PC-9 (cell line): ENCODE measurements at regions of chr17 and their contacts with region 1.

Region 1: DNA sequence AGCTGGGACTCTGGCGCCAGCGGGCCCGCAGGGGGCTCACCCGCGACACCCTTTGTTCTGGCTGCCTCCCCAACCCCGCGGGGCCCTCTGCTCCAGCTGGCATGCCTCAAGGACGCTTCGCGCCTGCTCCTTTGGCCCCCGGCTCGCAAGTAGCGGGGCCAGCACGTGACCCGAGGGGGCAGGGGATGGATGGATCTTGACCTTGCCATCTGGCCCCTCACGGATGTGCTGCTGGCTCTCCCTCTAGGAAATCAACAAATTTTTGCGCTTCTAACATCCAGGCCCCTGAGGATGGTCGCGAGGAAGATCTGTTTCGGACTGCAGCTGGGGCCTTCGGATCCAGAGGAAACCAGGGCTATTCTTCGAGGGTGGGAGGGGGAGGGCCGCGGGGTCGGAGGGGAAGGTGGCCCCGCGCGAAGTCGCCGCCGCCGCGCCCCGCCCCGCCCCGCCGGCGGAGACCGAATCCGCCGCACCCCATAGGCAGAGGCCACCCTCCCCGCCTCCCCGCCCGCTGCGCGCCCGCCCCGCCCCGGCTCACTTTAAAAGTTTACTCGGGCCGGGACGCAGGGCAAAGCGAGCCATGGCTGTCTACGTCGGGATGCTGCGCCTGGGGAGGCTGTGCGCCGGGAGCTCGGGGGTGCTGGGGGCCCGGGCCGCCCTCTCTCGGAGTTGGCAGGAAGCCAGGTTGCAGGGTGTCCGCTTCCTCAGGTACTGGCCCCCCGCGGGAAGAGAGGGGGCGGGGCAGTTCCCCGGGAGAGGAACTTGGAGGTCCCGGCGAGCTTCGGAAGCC is at the start of gene ACSF2:
- DNase-seq: peak; percentile 56 to 72
- H3K4me3 ChIP-seq: peak within 1 kb of the TSS; percentile 63
- H3K27ac ChIP-seq: peak within 1 kb of the TSS; percentile 92
- H3K4me1 ChIP-seq: peaks cover 84% of the 10 kb centered on the region
- H3K27me3 ChIP-seq: no peaks in the 10 kb centered on the region
- CTCF ChIP-seq: no peak
- total RNA-seq, gene ACSF2: 149 and 154 TPM in 2 replicates

Region 2: GRCh38 chr17:49677933-49678847 is 747.7 kb before region 1 on chr17 and contains the start of gene SPOP:
- CTCF ChIA-PET with region 1: no interaction called
- POLR2A ChIA-PET with region 1: interaction called, 20 read pairs
- intact Hi-C with region 1: no loop called
- DNase-seq: peak; percentile 97
- H3K4me3 ChIP-seq: peak within 1 kb of the TSS; percentile 85
- H3K27ac ChIP-seq: peak within 1 kb of the TSS; percentile 42
- H3K4me1 ChIP-seq: peaks cover 13% of the 10 kb centered on the region
- H3K27me3 ChIP-seq: peaks cover 6% of the 10 kb centered on the region
- CTCF ChIP-seq: no peak
- total RNA-seq, gene SPOP: 41.7 and 47.3 TPM in 2 replicates

Region 3: GRCh38 chr17:50397111-50397918 is 28.6 kb before region 1 on chr17 and contains the start of gene LRRC59:
- CTCF ChIA-PET with region 1: interaction called, 19 read pairs
- POLR2A ChIA-PET with region 1: interaction called, 5 read pairs
- intact Hi-C with region 1: loop called (anchors 2 kb)
- DNase-seq: peak; percentile 64 to 88
- H3K4me3 ChIP-seq: peak within 1 kb of the TSS; percentile 98
- H3K27ac ChIP-seq: peak within 1 kb of the TSS; percentile 79
- H3K4me1 ChIP-seq: peaks cover 46% of the 10 kb centered on the region
- H3K27me3 ChIP-seq: no peaks in the 10 kb centered on the region
- CTCF ChIP-seq: peak; percentile 96
- total RNA-seq, gene LRRC59: 72.9 and 102 TPM in 2 replicates

Region 4: GRCh38 chr17:50443368-50443971 is 17.6 kb after region 1 on chr17:
- CTCF ChIA-PET with region 1: interaction called, 16 read pairs
- POLR2A ChIA-PET with region 1: interaction called, 4 read pairs
- intact Hi-C with region 1: loop called (anchors 1 kb)
- DNase-seq: peak; percentile 43 to 97
- H3K4me3 ChIP-seq: peak overlapping the region; percentile 47
- H3K27ac ChIP-seq: peak overlapping the region; percentile 90
- H3K4me1 ChIP-seq: peaks cover 87% of the 10 kb centered on the region
- H3K27me3 ChIP-seq: no peaks in the 10 kb centered on the region
- CTCF ChIP-seq: no peak; the same call in 1 of the 2 replicates

Region 5: GRCh38 chr17:50452610-50453300 is 26.9 kb after region 1 on chr17:
- CTCF ChIA-PET with region 1: no interaction called
- POLR2A ChIA-PET with region 1: no interaction called
- intact Hi-C with region 1: loop called (anchors 1 kb)
- DNase-seq: peak; percentile 56 to 98
- H3K4me3 ChIP-seq: peak overlapping the region; percentile 39; the same call in 1 of the 2 replicates
- H3K27ac ChIP-seq: peak overlapping the region; percentile 64
- H3K4me1 ChIP-seq: peaks cover 72% of the 10 kb centered on the region
- H3K27me3 ChIP-seq: no peaks in the 10 kb centered on the region
- CTCF ChIP-seq: no peak

Region 6: DNA sequence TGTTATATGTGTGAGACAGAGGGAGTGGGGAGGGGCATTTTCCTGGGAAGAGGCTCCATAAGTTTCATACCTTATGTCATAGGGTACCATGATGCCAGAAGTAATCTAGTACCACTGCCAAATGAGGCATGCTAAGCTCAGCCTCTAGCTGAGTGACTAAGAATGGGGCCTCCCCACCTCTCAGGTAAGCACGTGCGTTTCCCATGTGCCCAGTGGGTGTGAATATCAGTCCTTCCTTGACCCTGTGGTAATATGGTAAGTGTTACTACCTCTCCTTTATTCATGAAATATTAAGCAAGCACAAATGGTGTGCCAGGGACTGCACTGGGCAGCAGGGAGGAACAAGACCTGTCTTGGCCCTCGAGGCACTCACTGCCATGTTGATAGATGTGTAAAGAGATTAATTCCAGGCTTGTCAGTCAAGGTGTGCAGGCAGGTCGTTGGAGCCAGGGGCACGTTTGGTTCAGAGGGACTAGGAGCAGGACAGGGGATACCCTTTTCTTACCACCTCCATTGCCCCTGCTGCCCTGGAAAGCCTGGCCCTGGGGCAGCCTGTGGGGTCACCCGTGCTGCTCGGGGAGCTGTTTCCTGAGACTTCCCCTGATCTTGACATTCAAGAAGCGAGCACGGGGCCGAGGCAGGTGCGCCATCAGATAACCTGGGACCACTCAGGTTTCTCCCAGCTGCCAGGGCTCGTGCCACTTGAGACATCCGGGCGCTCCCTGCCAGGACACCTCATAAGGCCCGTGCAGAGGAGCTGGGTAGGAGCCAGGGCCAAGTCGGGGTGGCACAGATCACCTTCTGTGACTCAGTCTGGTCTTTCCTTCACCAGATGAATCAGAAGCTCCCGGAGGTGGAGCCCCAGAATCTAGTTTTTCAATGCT is 61.6 kb after region 1 on chr17:
- CTCF ChIA-PET with region 1: no interaction called
- POLR2A ChIA-PET with region 1: no interaction called
- intact Hi-C with region 1: no loop called
- DNase-seq: peak; percentile 80 to 91
- H3K4me3 ChIP-seq: no peak overlapping the region
- H3K27ac ChIP-seq: no peak overlapping the region
- H3K4me1 ChIP-seq: peaks cover 25% of the 10 kb centered on the region
- H3K27me3 ChIP-seq: no peaks in the 10 kb centered on the region
- CTCF ChIP-seq: no peak

Region 7: DNA sequence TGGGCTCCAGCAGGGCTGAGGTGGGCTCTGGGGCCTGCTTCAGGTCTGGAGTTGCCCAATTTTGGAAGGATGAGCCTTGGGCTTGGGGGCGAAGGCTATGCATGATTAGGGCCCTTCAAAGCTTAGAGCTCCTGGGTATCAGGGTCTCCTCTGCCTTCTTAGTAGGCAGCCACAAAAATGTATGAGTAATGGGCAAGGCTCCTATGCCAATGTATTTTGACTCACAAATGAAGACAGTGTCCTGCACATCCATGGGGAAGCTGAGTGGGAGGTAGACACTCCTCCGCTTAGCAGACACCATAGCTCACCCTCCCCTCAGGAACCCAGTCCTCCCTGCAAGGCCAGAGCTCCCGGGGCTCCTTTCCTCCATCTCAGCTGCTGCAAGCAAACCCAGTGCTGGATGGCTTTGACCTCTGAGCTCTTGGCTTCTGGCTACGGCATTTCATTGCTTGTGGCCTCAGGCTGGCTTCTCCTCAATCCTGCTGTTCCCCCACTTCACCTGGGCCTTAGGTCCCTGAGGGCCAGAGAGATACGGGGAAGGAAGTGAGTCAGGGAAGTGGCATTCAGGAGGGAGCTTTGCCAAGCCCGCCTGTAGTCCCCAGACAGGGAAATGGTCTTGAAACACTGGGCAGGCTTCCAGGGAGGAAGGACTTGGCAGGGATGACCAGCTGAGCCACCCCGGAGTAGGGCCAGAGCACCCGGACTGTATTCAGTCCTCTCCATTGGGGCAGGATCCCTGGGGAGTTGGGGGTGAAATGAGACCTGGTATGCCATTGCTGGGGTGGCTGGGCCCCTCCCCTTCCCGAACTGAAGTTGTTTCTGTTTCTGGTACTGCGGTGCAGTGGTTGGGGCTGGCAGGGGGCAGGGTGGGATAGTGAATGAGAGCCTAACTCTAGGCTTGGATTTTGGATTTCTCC is 213.2 kb after region 1 on chr17:
- CTCF ChIA-PET with region 1: no interaction called
- POLR2A ChIA-PET with region 1: interaction called, 12 read pairs
- intact Hi-C with region 1: no loop called
- DNase-seq: peak; percentile 97 to 100
- H3K4me3 ChIP-seq: peak overlapping the region; percentile 81; the same call in 1 of the 2 replicates
- H3K27ac ChIP-seq: peak overlapping the region; percentile 91
- H3K4me1 ChIP-seq: peaks cover 78% of the 10 kb centered on the region
- H3K27me3 ChIP-seq: no peaks in the 10 kb centered on the region
- CTCF ChIP-seq: no peak

Region 8: GRCh38 chr17:50649042-50649904 is 223.4 kb after region 1 on chr17:
- CTCF ChIA-PET with region 1: no interaction called
- POLR2A ChIA-PET with region 1: no interaction called
- intact Hi-C with region 1: no loop called
- DNase-seq: peak in 1 of 2 experiments; percentile 80
- H3K4me3 ChIP-seq: no peak overlapping the region
- H3K27ac ChIP-seq: peak overlapping the region; percentile 38
- H3K4me1 ChIP-seq: 0 out of 2 replicates have a peak, but pooled peaks cover 12% of the 10 kb centered on the region
- H3K27me3 ChIP-seq: no peaks in the 10 kb centered on the region
- CTCF ChIP-seq: no peak